ENCODE measurements at regions of chr6 and their contacts with region 1.

Region 1: GRCh38 chr6:106194949-106195921 is 109.1 kb downstream of the PRDM1 start:
- DNase-seq: no peak
- H3K4me3 Mint-ChIP-seq: peak overlapping the region; percentile 59
- H3K27ac Mint-ChIP-seq: peak overlapping the region; percentile 88
- H3K4me1 Mint-ChIP-seq: peaks cover 38% of the 10 kb centered on the region
- H3K27me3 Mint-ChIP-seq: no peaks in the 10 kb centered on the region

Region 2: GRCh38 chr6:106103728-106104109 is 91.5 kb before region 1 on chr6:
- CTCF ChIA-PET with region 1: no interaction called
- intact Hi-C with region 1: loop called (anchors 1 kb)
- DNase-seq: peak; percentile 63
- H3K4me3 Mint-ChIP-seq: peak overlapping the region; percentile 20
- H3K27ac Mint-ChIP-seq: peak overlapping the region; percentile 1
- H3K4me1 Mint-ChIP-seq: peaks cover 57% of the 10 kb centered on the region
- H3K27me3 Mint-ChIP-seq: peaks cover 4% of the 10 kb centered on the region

Region 3: GRCh38 chr6:106141441-106142237 is 53.6 kb before region 1 on chr6:
- CTCF ChIA-PET with region 1: interaction called, 3 read pairs
- intact Hi-C with region 1: loop called (anchors 1 kb)
- DNase-seq: peak; percentile 75
- H3K4me3 Mint-ChIP-seq: peak overlapping the region; percentile 13
- H3K27ac Mint-ChIP-seq: peak overlapping the region; percentile 83
- H3K4me1 Mint-ChIP-seq: peaks cover 31% of the 10 kb centered on the region
- H3K27me3 Mint-ChIP-seq: no peaks in the 10 kb centered on the region

Region 4: GRCh38 chr6:106181664-106182418 is 13.4 kb before region 1 on chr6:
- CTCF ChIA-PET with region 1: interaction called, 4 read pairs
- intact Hi-C with region 1: loop called (anchors 1 kb)
- DNase-seq: no peak
- H3K4me3 Mint-ChIP-seq: no peak overlapping the region
- H3K27ac Mint-ChIP-seq: no peak overlapping the region
- H3K4me1 Mint-ChIP-seq: peaks cover 33% of the 10 kb centered on the region
- H3K27me3 Mint-ChIP-seq: no peaks in the 10 kb centered on the region